ENCODE measurements at regions of chr1 and their contacts with region 1.

Region 1: GRCh38 chr1:199113265-199113869 is 474.5 kb downstream of the PTPRC start:
- DNase-seq: peak; percentile 80
- ATAC-seq: peak; percentile 71
- H3K4me3 Mint-ChIP-seq: no peak overlapping the region
- H3K27ac Mint-ChIP-seq: no peak overlapping the region
- H3K4me1 Mint-ChIP-seq: peaks cover 9% of the 10 kb centered on the region
- H3K27me3 Mint-ChIP-seq: no peaks in the 10 kb centered on the region

Region 2: GRCh38 chr1:198929961-198930599 is 183.3 kb before region 1 on chr1:
- CTCF ChIA-PET with region 1: interaction called, 10 read pairs
- DNase-seq: no peak
- ATAC-seq: peak; percentile 54
- H3K4me3 Mint-ChIP-seq: peak overlapping the region; percentile 62
- H3K27ac Mint-ChIP-seq: peak overlapping the region; percentile 61
- H3K4me1 Mint-ChIP-seq: peaks cover 46% of the 10 kb centered on the region
- H3K27me3 Mint-ChIP-seq: no peaks in the 10 kb centered on the region

Region 3: GRCh38 chr1:198937231-198938031 is 175.9 kb before region 1 on chr1:
- CTCF ChIA-PET with region 1: interaction called, 10 read pairs
- DNase-seq: peak; percentile 75
- ATAC-seq: peak; percentile 94
- H3K4me3 Mint-ChIP-seq: no peak overlapping the region
- H3K27ac Mint-ChIP-seq: peak overlapping the region; percentile 92
- H3K4me1 Mint-ChIP-seq: peaks cover 25% of the 10 kb centered on the region
- H3K27me3 Mint-ChIP-seq: no peaks in the 10 kb centered on the region

Region 4: DNA sequence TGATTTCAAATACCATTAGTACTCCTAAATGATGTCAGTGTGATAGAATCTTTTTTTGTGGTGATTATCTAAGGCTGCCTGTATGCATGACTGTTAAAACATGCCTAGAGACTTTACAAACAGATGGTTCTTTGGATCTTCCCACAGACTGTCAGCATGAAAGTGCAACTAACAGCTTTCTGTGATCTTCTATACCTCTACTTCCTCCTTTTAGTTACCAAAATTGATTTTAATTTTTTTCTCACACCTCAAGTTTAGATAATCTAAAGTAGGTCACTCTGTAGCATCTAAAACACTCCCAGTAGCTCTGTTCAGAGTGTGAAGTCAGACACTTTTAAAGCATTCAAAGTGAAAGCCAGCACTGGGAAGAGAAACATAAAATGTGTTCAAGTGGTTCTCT is 60.0 kb after region 1 on chr1:
- CTCF ChIA-PET with region 1: no interaction called
- DNase-seq: no peak
- ATAC-seq: peak; percentile 89
- H3K4me3 Mint-ChIP-seq: no peak overlapping the region
- H3K27ac Mint-ChIP-seq: peak overlapping the region; percentile 58
- H3K4me1 Mint-ChIP-seq: peaks cover 39% of the 10 kb centered on the region
- H3K27me3 Mint-ChIP-seq: peaks cover 7% of the 10 kb centered on the region

Measured in activated CD8-positive, alpha-beta memory T cell treated with anti-CD3 and anti-CD28 coated beads, Interleukin-2, amount 10 ng/mL, durations not matched to agents 7 days and 5 days (primary cell).